Activated CD4-positive, alpha-beta memory T cell treated with anti-CD3 and anti-CD28 coated beads for 36 hours (primary cell): ENCODE measurements at regions of chr5 and their contacts with region 1.

Region 1: DNA sequence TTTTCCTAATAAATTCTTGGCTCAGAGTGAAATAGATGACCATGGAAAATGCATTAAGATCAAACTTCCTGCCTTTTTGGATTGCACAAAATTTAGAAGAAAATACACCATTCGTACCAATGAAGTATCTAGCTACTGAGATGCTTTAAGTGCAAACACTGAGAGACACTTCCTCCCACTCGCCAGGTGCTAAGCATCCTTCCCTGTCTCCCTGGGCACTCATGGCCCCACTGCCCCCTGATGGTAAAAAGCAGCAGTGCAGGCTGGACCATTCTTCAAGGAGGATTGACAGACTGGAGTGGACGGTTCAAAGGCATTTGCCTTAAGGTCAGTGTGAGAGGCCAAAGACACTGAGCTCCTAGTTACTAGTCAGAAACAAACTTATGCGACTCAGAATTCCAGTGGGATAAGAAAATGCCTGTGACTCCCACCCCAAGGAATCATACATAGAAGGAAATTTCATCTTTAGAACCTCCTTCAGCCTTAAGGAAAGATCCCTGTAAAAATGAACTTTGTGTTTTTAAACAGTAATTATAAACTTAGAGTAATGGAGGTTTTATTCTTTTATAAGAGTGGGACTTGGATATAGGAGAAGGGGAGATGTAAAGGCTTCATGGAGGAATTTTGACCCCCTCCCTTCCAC is 86.0 kb upstream of the SLC30A5 start:
- DNase-seq: peak; percentile 82
- H3K4me3 Mint-ChIP-seq: no peak overlapping the region
- H3K27ac Mint-ChIP-seq: no peak overlapping the region
- H3K4me1 Mint-ChIP-seq: no peaks in the 10 kb centered on the region
- H3K27me3 Mint-ChIP-seq: peaks cover 21% of the 10 kb centered on the region

Region 2: GRCh38 chr5:68884883-68885282 is 123.0 kb before region 1 on chr5:
- CTCF ChIA-PET with region 1: no interaction called
- POLR2A ChIA-PET with region 1: no interaction called
- intact Hi-C with region 1: loop called (anchors 5 kb)
- DNase-seq: no peak
- H3K4me3 Mint-ChIP-seq: no peak overlapping the region
- H3K27ac Mint-ChIP-seq: no peak overlapping the region
- H3K4me1 Mint-ChIP-seq: peaks cover 29% of the 10 kb centered on the region
- H3K27me3 Mint-ChIP-seq: no peaks in the 10 kb centered on the region

Region 3: GRCh38 chr5:69213513-69214215 is 205.8 kb after region 1 on chr5:
- CTCF ChIA-PET with region 1: no interaction called
- POLR2A ChIA-PET with region 1: no interaction called
- intact Hi-C with region 1: no loop called
- DNase-seq: no peak
- H3K4me3 Mint-ChIP-seq: no peak overlapping the region
- H3K27ac Mint-ChIP-seq: no peak overlapping the region
- H3K4me1 Mint-ChIP-seq: peaks cover 12% of the 10 kb centered on the region
- H3K27me3 Mint-ChIP-seq: no peaks in the 10 kb centered on the region